ENCODE measurements at regions of chr5 and their contacts with region 1.

Region 1: DNA sequence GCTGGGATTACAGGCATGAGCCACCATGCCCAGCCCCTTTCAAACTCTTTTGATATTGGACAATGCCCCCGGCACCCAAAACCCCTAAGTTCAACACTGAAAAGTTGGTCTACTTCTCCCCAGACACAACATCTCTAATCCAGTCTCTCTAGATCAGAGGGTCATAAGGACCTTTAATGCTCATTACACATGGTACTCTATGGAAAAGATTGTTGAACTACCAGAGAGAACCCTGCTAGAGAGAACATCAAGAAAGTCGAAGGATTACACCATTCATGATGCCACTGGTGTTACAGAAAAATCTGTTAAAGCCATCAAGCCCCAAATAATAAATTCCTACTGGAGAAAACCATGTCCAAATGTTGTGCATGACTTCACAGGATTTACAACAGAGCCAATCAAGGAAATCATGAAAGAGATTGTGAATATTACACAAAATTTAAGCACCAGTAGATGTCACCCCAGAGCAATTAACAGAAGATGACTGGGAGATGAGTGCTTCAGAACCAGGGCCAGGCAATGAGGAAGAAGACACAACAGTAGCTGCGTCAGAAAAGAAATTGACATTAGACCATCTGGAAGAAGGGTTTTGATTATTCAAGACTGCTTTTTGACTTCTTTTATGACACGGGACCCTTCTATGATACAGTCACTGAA is 28.3 kb upstream of the NIPAL4 start:
- DNase-seq: peak; percentile 41
- H3K4me3 Mint-ChIP-seq: no peak overlapping the region
- H3K27ac Mint-ChIP-seq: no peak overlapping the region
- H3K4me1 Mint-ChIP-seq: peaks cover 3% of the 10 kb centered on the region
- H3K27me3 Mint-ChIP-seq: peaks cover 9% of the 10 kb centered on the region

Region 2: GRCh38 chr5:156883316-156883875 is 548.3 kb before region 1 on chr5:
- CTCF ChIA-PET with region 1: no interaction called
- intact Hi-C with region 1: no loop called
- DNase-seq: no peak
- H3K4me3 Mint-ChIP-seq: no peak overlapping the region
- H3K27ac Mint-ChIP-seq: no peak overlapping the region
- H3K4me1 Mint-ChIP-seq: no peaks in the 10 kb centered on the region
- H3K27me3 Mint-ChIP-seq: no peaks in the 10 kb centered on the region

Region 3: GRCh38 chr5:157456301-157456700 is 24.6 kb after region 1 on chr5:
- CTCF ChIA-PET with region 1: interaction called, 12 read pairs
- intact Hi-C with region 1: no loop called
- DNase-seq: no peak
- H3K4me3 Mint-ChIP-seq: no peak overlapping the region
- H3K27ac Mint-ChIP-seq: no peak overlapping the region
- H3K4me1 Mint-ChIP-seq: peaks cover 8% of the 10 kb centered on the region
- H3K27me3 Mint-ChIP-seq: peaks cover 18% of the 10 kb centered on the region

Region 4: DNA sequence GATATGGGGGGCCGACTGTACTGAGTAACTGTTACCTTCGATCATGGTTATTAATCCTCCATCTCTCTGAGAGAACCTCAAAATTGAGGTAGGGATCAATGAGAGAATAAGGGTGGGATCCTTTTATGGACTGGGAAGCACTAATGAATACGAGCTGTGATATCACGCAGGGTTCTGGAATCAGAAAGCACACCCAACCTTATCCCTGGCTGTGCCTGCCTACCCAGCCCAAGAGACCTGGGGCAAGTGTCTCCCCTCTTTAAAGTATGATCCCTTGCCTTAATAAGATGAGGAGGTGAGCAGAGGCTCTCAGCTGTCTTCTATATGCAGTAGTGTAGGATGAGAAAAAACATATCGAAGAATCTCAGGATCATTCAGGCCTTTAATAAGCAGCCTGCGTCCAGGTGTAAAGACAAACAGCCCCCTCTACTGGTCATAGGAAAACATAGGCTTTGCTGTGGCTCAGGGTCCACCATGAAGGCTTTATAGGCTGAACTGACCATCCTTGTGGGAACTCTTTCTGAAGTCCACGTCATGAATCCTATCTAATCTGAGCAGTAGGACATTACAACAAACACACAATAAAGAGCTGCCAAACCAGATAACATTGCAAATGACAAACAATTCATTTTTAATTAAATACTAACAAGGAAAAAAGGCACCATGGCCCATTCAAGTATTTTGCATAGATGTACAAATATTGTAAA is 45.2 kb after region 1 on chr5:
- CTCF ChIA-PET with region 1: interaction called, 76 read pairs
- intact Hi-C with region 1: loop called (anchors 1 kb)
- DNase-seq: peak; percentile 59
- H3K4me3 Mint-ChIP-seq: no peak overlapping the region
- H3K27ac Mint-ChIP-seq: no peak overlapping the region
- H3K4me1 Mint-ChIP-seq: no peaks in the 10 kb centered on the region
- H3K27me3 Mint-ChIP-seq: no peaks in the 10 kb centered on the region

Region 5: DNA sequence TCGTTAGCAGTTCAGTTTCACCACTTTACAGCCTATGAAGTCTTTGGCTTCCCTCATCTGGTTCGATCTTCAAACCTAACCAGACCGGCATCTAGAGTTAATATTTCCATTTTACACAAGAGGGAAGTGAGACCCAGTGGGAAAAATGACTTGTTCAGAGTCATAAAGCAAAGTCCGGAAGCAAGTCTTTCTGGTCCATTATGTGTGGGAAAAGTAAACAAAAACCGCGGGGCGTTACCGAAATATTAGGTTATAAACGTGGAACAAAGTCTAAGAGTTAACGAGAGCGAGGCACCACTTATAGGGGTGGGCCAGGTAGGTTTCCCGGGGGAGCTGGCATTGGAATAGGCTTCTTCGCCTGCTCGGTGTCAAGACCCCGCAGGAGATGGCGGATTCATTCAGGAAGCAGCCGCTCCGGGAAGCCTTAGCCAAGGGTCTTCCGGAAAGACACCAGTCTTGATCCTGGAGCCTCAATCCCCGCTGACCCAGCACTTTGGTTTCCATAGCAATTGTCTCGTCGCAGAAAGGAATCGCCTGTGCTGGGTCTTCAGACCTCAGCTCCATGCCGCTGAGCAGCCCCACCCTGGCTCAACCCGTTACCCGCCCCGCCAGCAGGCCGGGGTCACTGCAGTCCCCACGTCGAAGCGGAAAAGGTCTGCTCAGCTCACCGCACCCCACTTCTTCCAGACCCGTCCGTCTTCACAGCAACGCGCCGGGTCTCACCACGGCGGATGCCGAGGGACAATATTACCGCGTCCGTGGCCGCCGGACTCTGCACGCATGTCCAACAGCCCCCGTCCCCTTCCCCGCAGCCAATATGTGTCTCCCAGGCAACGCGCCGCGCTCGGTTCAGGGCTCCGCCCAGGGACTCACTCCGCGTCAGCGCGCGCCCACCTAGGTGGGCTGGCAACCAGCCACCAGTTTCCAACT is 239.3 kb after region 1 on chr5 and contains the start of gene C5orf52:
- CTCF ChIA-PET with region 1: interaction called, 3 read pairs
- intact Hi-C with region 1: loop called (anchors 2 kb)
- DNase-seq: peak; percentile 31
- H3K4me3 Mint-ChIP-seq: peak within 1 kb of the TSS; percentile 73
- H3K27ac Mint-ChIP-seq: peak within 1 kb of the TSS; percentile 10
- H3K4me1 Mint-ChIP-seq: peaks cover 18% of the 10 kb centered on the region
- H3K27me3 Mint-ChIP-seq: peaks cover 35% of the 10 kb centered on the region
- total RNA-seq, gene C5orf52: not detected

Measured in activated naive CD4-positive, alpha-beta T cell treated with anti-CD3 and anti-CD28 coated beads for 36 hours (primary cell).